Activated CD4-positive, alpha-beta memory T cell treated with anti-CD3 and anti-CD28 coated beads, Interleukin-2, amount 10 ng/mL, durations not matched to agents 7 days and 5 days (primary cell): ENCODE measurements at regions of chr18 and their contacts with region 1.

Region 1: GRCh38 chr18:48445540-48445939 is 36.4 kb upstream of the ZBTB7C start:
- DNase-seq: peak; percentile 77
- H3K4me3 Mint-ChIP-seq: no peak overlapping the region
- H3K27ac Mint-ChIP-seq: no peak overlapping the region
- H3K4me1 Mint-ChIP-seq: peaks cover 7% of the 10 kb centered on the region
- H3K27me3 Mint-ChIP-seq: peaks cover 41% of the 10 kb centered on the region

Region 2: GRCh38 chr18:48230467-48231113 is 214.9 kb before region 1 on chr18:
- CTCF ChIA-PET with region 1: interaction called, 56 read pairs
- POLR2A ChIA-PET with region 1: interaction called, 6 read pairs
- DNase-seq: peak; percentile 67
- H3K4me3 Mint-ChIP-seq: no peak overlapping the region
- H3K27ac Mint-ChIP-seq: peak overlapping the region; percentile 2
- H3K4me1 Mint-ChIP-seq: peaks cover 49% of the 10 kb centered on the region
- H3K27me3 Mint-ChIP-seq: peaks cover 26% of the 10 kb centered on the region

Region 3: GRCh38 chr18:48367557-48367956 is 78.0 kb before region 1 on chr18:
- CTCF ChIA-PET with region 1: no interaction called
- POLR2A ChIA-PET with region 1: no interaction called
- DNase-seq: no peak
- H3K4me3 Mint-ChIP-seq: no peak overlapping the region
- H3K27ac Mint-ChIP-seq: no peak overlapping the region
- H3K4me1 Mint-ChIP-seq: no peaks in the 10 kb centered on the region
- H3K27me3 Mint-ChIP-seq: peaks cover 29% of the 10 kb centered on the region

Region 4: GRCh38 chr18:48455555-48456478 is 10.3 kb after region 1 on chr18:
- CTCF ChIA-PET with region 1: interaction called, 33 read pairs
- POLR2A ChIA-PET with region 1: interaction called, 3 read pairs
- DNase-seq: peak; percentile 34
- H3K4me3 Mint-ChIP-seq: no peak overlapping the region
- H3K27ac Mint-ChIP-seq: no peak overlapping the region
- H3K4me1 Mint-ChIP-seq: peaks cover 24% of the 10 kb centered on the region
- H3K27me3 Mint-ChIP-seq: peaks cover 49% of the 10 kb centered on the region

Region 5: GRCh38 chr18:48468151-48468550 is 22.6 kb after region 1 on chr18:
- CTCF ChIA-PET with region 1: interaction called, 10 read pairs
- POLR2A ChIA-PET with region 1: no interaction called
- DNase-seq: no peak
- H3K4me3 Mint-ChIP-seq: no peak overlapping the region
- H3K27ac Mint-ChIP-seq: no peak overlapping the region
- H3K4me1 Mint-ChIP-seq: no peaks in the 10 kb centered on the region
- H3K27me3 Mint-ChIP-seq: peaks cover 40% of the 10 kb centered on the region